Activated CD4-positive, alpha-beta memory T cell treated with anti-CD3 and anti-CD28 coated beads for 36 hours (primary cell): ENCODE measurements at regions of chr11 and their contacts with region 1.

Region 1: GRCh38 chr11:85752890-85753581 is 57.9 kb downstream of the SYTL2 start:
- DNase-seq: peak; percentile 94
- H3K4me3 Mint-ChIP-seq: peak overlapping the region; percentile 70
- H3K27ac Mint-ChIP-seq: peak overlapping the region; percentile 96
- H3K4me1 Mint-ChIP-seq: peaks cover 95% of the 10 kb centered on the region
- H3K27me3 Mint-ChIP-seq: peaks cover 3% of the 10 kb centered on the region

Region 2: DNA sequence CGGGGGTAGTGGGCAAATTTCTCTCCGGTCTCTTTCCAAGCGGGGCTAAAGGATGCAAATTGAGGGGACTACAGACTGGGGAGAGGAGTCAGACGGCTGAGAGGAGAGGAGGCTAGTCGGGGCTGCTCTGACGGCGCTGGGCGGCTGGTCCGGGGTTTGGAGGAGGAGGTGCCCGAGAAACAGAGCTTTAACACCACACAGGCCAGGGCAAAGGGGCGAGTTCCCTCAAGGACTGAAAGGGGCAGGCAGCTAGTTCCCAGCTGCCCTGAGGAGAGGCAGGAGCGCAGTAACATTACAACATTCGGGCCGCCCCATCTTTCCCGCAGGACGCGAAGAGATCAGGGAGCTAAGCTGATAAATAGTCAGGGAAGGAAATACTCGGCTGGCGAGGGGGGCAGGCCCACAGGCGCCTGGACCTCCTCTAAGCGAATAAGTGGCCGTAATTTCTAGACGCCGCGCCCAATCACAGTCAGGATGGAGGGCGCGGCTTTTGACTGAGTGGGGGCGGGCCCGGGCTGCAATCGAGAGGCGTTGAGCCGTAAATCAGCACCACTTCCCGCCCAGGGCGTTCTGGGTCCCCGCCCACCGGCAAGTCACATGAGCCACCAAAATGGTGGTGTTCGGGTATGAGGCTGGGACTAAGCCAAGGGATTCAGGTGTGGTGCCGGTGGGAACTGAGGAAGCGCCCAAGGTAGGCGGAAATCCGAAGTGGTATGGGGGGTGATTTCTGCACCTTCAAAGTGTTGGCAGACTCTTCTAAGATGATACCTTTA is 124.9 kb before region 1 on chr11 and contains the start of gene TMEM126B:
- CTCF ChIA-PET with region 1: no interaction called
- POLR2A ChIA-PET with region 1: interaction called, 3 read pairs
- intact Hi-C with region 1: loop called (anchors 1 kb)
- DNase-seq: peak; percentile 98
- H3K4me3 Mint-ChIP-seq: peak within 1 kb of the TSS; percentile 100
- H3K27ac Mint-ChIP-seq: peak within 1 kb of the TSS; percentile 99
- H3K4me1 Mint-ChIP-seq: peaks cover 38% of the 10 kb centered on the region
- H3K27me3 Mint-ChIP-seq: no peaks in the 10 kb centered on the region
- total RNA-seq, gene TMEM126B: 59.8 to 64.5 TPM

Region 3: DNA sequence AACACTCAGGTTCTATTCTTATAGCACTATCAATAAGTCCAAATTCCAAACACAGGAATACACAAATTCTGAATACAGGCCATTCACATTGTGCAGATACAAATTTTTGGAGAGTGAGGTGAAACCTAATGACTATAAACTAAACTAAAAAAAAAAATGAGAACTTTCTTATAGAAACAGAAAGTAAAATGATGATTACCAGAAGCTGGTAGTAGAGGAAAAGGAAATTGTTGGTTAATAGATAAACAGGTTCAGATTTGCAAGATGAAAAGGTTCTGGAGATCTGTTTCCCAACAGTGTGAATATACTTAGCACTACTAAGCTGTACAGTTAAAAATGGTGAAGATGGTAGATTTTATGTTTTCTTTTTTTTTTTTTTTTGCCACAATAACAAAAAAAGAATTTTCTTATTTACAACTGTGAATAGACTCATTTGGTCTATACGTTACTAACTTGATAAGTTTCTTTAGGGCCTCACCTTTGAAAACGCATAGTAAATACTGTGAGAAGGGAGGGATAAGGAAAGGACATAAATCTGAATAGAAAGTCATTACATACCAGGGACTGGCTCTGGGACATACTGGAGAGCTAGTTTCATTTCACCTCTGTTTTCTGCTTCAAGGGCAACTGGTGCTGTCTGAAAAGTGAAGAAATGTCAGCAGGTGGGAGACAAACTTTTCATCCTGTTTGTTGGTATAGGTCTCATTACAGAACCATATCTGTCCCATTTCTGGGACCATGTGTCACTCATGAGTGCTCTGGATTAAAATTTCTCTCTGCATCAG is 52.9 kb before region 1 on chr11:
- CTCF ChIA-PET with region 1: no interaction called
- POLR2A ChIA-PET with region 1: no interaction called
- intact Hi-C with region 1: loop called (anchors 2 kb)
- DNase-seq: no peak
- H3K4me3 Mint-ChIP-seq: no peak overlapping the region
- H3K27ac Mint-ChIP-seq: peak overlapping the region; percentile 63
- H3K4me1 Mint-ChIP-seq: peaks cover 34% of the 10 kb centered on the region
- H3K27me3 Mint-ChIP-seq: no peaks in the 10 kb centered on the region

Region 4: GRCh38 chr11:85737748-85738147 is 15.3 kb before region 1 on chr11:
- CTCF ChIA-PET with region 1: no interaction called
- POLR2A ChIA-PET with region 1: no interaction called
- intact Hi-C with region 1: no loop called
- DNase-seq: peak; percentile 34
- H3K4me3 Mint-ChIP-seq: no peak overlapping the region
- H3K27ac Mint-ChIP-seq: no peak overlapping the region
- H3K4me1 Mint-ChIP-seq: peaks cover 16% of the 10 kb centered on the region
- H3K27me3 Mint-ChIP-seq: no peaks in the 10 kb centered on the region

Region 5: GRCh38 chr11:85768473-85769146 is 15.6 kb after region 1 on chr11:
- CTCF ChIA-PET with region 1: no interaction called
- POLR2A ChIA-PET with region 1: no interaction called
- intact Hi-C with region 1: loop called (anchors 2 kb)
- DNase-seq: peak; percentile 27
- H3K4me3 Mint-ChIP-seq: no peak overlapping the region
- H3K27ac Mint-ChIP-seq: no peak overlapping the region
- H3K4me1 Mint-ChIP-seq: peaks cover 46% of the 10 kb centered on the region
- H3K27me3 Mint-ChIP-seq: no peaks in the 10 kb centered on the region

Region 6: GRCh38 chr11:85810871-85811611 is 58.0 kb after region 1 on chr11 and contains the start of gene SYTL2:
- CTCF ChIA-PET with region 1: no interaction called
- POLR2A ChIA-PET with region 1: no interaction called
- intact Hi-C with region 1: loop called (anchors 1 kb)
- DNase-seq: peak; percentile 82
- H3K4me3 Mint-ChIP-seq: peak within 1 kb of the TSS; percentile 75
- H3K27ac Mint-ChIP-seq: peak within 1 kb of the TSS; percentile 42
- H3K4me1 Mint-ChIP-seq: peaks cover 28% of the 10 kb centered on the region
- H3K27me3 Mint-ChIP-seq: peaks cover 3% of the 10 kb centered on the region
- total RNA-seq, gene SYTL2: 10.2 TPM

Region 7: DNA sequence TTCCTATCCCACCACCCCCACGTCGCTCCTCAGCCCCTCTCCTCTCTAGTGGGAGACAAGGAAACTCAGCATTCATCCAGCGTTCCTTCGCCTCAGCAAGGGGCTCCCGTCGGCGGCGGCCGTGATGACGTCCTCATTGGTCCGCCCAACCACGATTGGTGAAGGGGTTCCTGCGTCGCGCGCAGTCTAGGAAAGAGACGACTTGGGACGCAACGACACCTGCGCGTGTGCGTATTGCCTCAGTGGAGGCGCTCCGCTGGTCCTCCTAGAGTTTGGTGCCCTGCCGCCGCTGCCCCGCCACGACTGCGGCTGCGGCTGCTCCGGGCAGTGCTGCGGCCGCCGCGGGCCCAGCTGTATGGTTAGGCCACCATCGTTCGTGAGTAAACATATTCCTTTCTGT is 678.2 kb after region 1 on chr11:
- CTCF ChIA-PET with region 1: no interaction called
- POLR2A ChIA-PET with region 1: no interaction called
- intact Hi-C with region 1: no loop called
- DNase-seq: no peak
- H3K4me3 Mint-ChIP-seq: no peak overlapping the region
- H3K27ac Mint-ChIP-seq: no peak overlapping the region
- H3K4me1 Mint-ChIP-seq: no peaks in the 10 kb centered on the region
- H3K27me3 Mint-ChIP-seq: no peaks in the 10 kb centered on the region